ENCODE measurements at regions of chr17 and their contacts with region 1.

Region 1: GRCh38 chr17:49707608-49708514 is at the start of gene SLC35B1:
- DNase-seq: peak; percentile 99 to 100 (median 99)
- ATAC-seq: peak; percentile 99 to 100 (median 100)
- H3K4me3 ChIP-seq: peak within 1 kb of the TSS; percentile 72 to 100 (median 90)
- H3K27ac ChIP-seq: peak within 1 kb of the TSS; percentile 88 to 99 (median 95)
- H3K4me1 ChIP-seq: peaks cover 0 to 30% (median 19%) of the 10 kb centered on the region in 12 donors
- H3K27me3 ChIP-seq: no peaks in the 10 kb centered on the region
- CTCF ChIP-seq: peak; percentile 50 to 91 (median 72)
- POLR2A ChIP-seq: peak in 1 of 2 donors; percentile 70
- total RNA-seq, gene SLC35B1: 61.0 to 93.4 (median 66.2) TPM

Region 2: GRCh38 chr17:49414622-49415350 is 293.1 kb before region 1 on chr17 and contains the start of gene PHB1:
- intact Hi-C with region 1: loop called in 1 of 10 experiments (anchors 10 kb)
- DNase-seq: peak; percentile 96 to 97 (median 96)
- ATAC-seq: peak; percentile 100
- H3K4me3 ChIP-seq: peak within 1 kb of the TSS; percentile 64 to 97 (median 88)
- H3K27ac ChIP-seq: peak within 1 kb of the TSS in 10 of 12 donors; percentile 28 to 84 (median 64)
- H3K4me1 ChIP-seq: peaks cover 0 to 19% (median 15%) of the 10 kb centered on the region in 12 donors
- H3K27me3 ChIP-seq: no peaks in the 10 kb centered on the region
- CTCF ChIP-seq: no peak
- POLR2A ChIP-seq: peak in 1 of 2 donors; percentile 53
- total RNA-seq, gene PHB1: 125 to 264 (median 211) TPM

Region 3: GRCh38 chr17:49567871-49568694 is 139.8 kb before region 1 on chr17:
- intact Hi-C with region 1: loop called in 1 of 10 experiments (anchors 2 kb)
- DNase-seq: peak; percentile 87 to 94 (median 92)
- ATAC-seq: peak; percentile 68 to 84 (median 76)
- H3K4me3 ChIP-seq: peak overlapping the region in 11 of 12 donors; percentile 8 to 60 (median 47)
- H3K27ac ChIP-seq: peak overlapping the region; percentile 59 to 92 (median 78)
- H3K4me1 ChIP-seq: peaks cover 0 to 42% (median 26%) of the 10 kb centered on the region in 12 donors
- H3K27me3 ChIP-seq: no peaks in the 10 kb centered on the region
- CTCF ChIP-seq: peak; percentile 87 to 98 (median 96)
- POLR2A ChIP-seq: no peak

Region 4: GRCh38 chr17:49603720-49604119 is 104.1 kb before region 1 on chr17:
- intact Hi-C with region 1: no loop called
- DNase-seq: no peak
- ATAC-seq: peak in 1 of 4 donors; percentile 33
- H3K4me3 ChIP-seq: no peak overlapping the region
- H3K27ac ChIP-seq: peak overlapping the region in 7 of 12 donors; percentile 12 to 72 (median 36)
- H3K4me1 ChIP-seq: peaks cover 0 to 32% (median 18%) of the 10 kb centered on the region in 12 donors
- H3K27me3 ChIP-seq: no peaks in the 10 kb centered on the region
- CTCF ChIP-seq: peak in 4 of 12 donors; percentile 14 to 29 (median 22)
- POLR2A ChIP-seq: no peak

Region 5: DNA sequence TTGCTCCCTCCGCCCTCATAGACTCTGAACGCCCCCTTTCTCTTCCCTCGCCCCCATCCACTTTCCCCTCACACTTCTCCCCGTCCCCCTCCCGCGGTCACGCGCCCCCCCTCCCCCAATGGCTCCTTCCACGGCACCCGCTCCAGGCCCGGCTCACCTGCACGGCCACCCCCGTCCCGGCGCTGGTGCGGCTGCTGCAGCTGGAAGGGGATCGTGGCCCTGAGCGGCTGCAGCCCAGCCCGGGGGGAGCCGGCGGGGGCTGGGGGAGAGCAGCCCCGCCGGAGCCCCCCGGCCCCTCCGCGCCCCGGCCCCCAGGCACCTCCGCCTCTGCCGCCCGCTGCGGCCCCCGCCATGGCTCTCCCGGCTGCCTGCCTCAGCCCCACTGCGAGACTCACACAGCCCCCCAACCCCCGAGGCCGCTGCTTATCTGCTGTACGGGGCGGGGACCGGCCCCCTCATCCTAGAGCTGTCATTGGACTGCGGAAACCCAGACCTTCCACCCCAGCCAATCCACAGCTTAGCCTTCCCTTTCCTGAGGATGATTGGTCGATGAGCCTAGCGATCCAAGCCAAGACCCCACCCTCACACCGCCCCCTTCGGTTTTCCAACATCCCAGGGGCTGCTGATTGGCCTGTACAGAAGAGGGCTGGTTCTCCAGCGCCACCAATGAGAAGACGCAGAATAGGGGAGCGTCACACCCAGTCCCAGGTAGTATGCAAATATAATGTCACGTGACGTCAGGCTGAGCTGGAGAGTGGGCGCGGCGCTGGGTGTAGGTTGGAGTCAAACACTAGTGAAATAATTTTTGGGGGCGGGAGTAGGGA is 56.1 kb after region 1 on chr17 and contains the start of gene FAM117A:
- intact Hi-C with region 1: loop called in 1 of 10 experiments (anchors 1 kb)
- DNase-seq: peak; percentile 94 to 97 (median 97)
- ATAC-seq: peak; percentile 99
- H3K4me3 ChIP-seq: peak within 1 kb of the TSS; percentile 67 to 96 (median 74)
- H3K27ac ChIP-seq: peak within 1 kb of the TSS in 11 of 12 donors; percentile 46 to 89 (median 68)
- H3K4me1 ChIP-seq: peaks cover 0 to 45% (median 17%) of the 10 kb centered on the region in 12 donors
- H3K27me3 ChIP-seq: no peaks in the 10 kb centered on the region
- CTCF ChIP-seq: no peak
- POLR2A ChIP-seq: peak in 1 of 2 donors; percentile 66
- total RNA-seq, gene FAM117A: 5.9 to 18.5 (median 14.9) TPM

Region 6: DNA sequence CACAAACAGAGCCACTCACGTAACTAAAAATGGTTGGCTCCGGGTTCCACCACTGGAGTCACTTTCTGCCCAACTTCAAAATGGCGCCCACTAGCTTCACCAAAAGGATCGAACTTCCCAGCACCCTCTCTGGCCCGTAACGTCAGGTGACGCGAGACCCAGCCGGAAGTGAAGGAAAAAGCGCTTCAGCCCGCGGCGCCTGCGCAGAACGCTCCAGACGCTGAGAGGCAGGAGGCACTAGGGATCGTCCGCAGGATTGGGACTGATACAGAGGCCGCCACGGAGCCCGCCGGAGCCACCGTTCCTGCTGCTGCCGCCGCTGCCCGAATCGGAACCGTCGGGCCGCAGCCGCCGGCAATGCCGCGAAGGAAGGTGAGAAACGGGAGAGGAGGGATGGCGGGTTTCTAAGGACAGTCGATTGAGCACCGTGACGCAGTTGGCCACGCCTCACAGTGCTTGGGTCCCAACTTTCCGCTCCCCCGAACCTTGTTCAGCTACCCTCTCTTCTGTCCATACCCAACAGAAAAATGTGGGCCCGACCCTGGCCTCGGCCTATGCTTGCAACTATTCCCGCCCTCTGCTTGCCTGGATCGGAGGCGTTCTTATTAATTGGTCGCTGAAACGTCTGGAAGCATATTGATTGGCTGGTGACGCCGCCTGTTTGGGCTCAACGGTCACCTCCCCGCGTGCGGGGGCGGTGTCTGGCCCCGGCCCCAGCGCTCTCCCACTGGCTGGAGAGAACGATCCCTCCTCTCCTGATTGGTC is 80.8 kb after region 1 on chr17 and contains the start of gene KAT7:
- intact Hi-C with region 1: loop called in 1 of 10 experiments (anchors 5 kb)
- DNase-seq: peak; percentile 99 to 100 (median 99)
- ATAC-seq: peak; percentile 95 to 97 (median 97)
- H3K4me3 ChIP-seq: peak within 1 kb of the TSS; percentile 77 to 100 (median 96)
- H3K27ac ChIP-seq: peak within 1 kb of the TSS; percentile 89 to 100 (median 99)
- H3K4me1 ChIP-seq: peaks cover 6 to 60% (median 42%) of the 10 kb centered on the region in 12 donors
- H3K27me3 ChIP-seq: no peaks in the 10 kb centered on the region
- CTCF ChIP-seq: peak in 7 of 12 donors; percentile 9 to 43 (median 25)
- POLR2A ChIP-seq: peak; percentile 38 to 87
- total RNA-seq, gene KAT7: 34.3 to 80.9 (median 56.0) TPM

Region 7: GRCh38 chr17:49822829-49823228 is 115.0 kb after region 1 on chr17:
- intact Hi-C with region 1: no loop called
- DNase-seq: peak in 4 of 5 donors; percentile 34 to 68 (median 56)
- ATAC-seq: peak; percentile 47 to 88 (median 78)
- H3K4me3 ChIP-seq: no peak overlapping the region
- H3K27ac ChIP-seq: peak overlapping the region in 1 of 12 donors; percentile 3
- H3K4me1 ChIP-seq: peaks cover 0 to 43% (median 6%) of the 10 kb centered on the region in 12 donors
- H3K27me3 ChIP-seq: no peaks in the 10 kb centered on the region
- CTCF ChIP-seq: no peak
- POLR2A ChIP-seq: no peak

Region 8: GRCh38 chr17:49851387-49852291 is 143.8 kb after region 1 on chr17:
- intact Hi-C with region 1: loop called in 8 of 10 experiments (anchors 2 to 5 kb)
- DNase-seq: peak; percentile 81 to 89 (median 83)
- ATAC-seq: peak; percentile 65 to 88 (median 80)
- H3K4me3 ChIP-seq: peak overlapping the region; percentile 40 to 82 (median 64)
- H3K27ac ChIP-seq: peak overlapping the region in 9 of 12 donors; percentile 20 to 72 (median 58)
- H3K4me1 ChIP-seq: peaks cover 0 to 24% (median 13%) of the 10 kb centered on the region in 12 donors
- H3K27me3 ChIP-seq: no peaks in the 10 kb centered on the region
- CTCF ChIP-seq: peak; percentile 70 to 86 (median 77)
- POLR2A ChIP-seq: no peak

Measured in heart left ventricle (tissue), 16 donors.